B cell (primary cell): ENCODE measurements at regions of chr1 and their contacts with region 1.

Region 1: DNA sequence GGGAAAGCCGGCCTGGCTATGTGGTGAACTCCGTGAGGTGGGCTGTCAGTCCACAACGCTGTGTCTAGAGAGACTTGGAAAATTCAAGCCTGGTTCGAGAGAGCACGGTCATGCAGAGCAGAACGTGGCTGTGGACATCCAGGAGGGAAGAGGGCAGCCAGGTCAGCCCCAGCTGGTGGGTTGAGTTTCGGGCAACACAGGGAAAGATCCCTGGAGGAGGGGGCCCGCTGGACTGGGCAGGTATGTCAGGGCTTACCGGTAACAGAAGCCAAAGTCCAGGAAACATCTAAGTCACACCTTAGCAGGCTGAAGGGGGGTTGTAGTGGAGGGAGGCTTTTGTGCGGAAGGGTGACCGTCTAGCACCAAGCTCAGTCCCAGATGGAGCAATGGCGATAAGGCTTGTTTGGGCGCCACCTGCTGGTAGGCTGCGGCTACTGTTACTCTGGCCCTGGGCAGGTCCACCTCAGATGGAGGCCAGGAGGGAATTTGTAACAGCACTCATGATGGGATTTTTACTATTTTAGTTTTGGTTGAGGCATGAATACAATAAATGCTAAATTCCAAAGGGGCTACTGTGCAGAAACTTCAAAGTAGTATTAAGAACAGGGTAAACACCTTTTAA is 143.3 kb upstream of the ZNF644 start:
- DNase-seq: peak; percentile 73
- ATAC-seq: peak; percentile 82
- H3K4me3 ChIP-seq: no peak overlapping the region
- H3K4me3 Mint-ChIP-seq: no peak overlapping the region
- H3K27ac ChIP-seq: no peak overlapping the region
- H3K27ac Mint-ChIP-seq: no peak overlapping the region
- H3K4me1 ChIP-seq: peaks cover 0 to 4% of the 10 kb centered on the region in 2 donors
- H3K4me1 Mint-ChIP-seq: peaks cover 2% of the 10 kb centered on the region
- H3K27me3 ChIP-seq: no peaks in the 10 kb centered on the region
- H3K27me3 Mint-ChIP-seq: peaks cover 3% of the 10 kb centered on the region
- CTCF ChIP-seq: peak; percentile 95

Region 2: DNA sequence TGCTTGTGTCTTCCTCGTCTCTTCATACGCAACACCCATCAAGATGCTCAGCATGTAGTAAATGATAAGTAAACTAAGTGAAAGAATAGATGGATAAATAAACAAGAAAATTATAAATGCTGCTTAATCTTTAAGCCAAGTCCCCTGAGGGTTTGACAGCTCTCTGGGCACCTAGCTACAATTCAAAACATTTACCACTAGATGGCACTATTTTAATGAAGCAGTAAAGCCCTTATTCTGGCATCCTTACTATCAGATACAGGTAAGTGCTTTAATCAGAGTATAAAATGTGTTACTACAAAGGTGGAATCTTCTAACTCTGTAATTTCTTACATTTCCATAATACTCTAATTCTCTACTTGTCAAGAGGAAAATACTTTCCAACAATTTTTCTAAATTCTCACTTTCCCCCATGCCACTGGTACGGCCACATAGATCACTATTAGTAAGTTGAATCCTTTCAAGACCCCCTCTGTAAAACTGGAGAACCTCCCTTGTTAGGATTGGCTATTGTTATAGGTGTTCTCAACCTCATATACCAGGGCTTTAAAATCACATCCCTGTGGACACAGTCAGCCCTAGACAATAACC is 585.8 kb before region 1 on chr1:
- CTCF ChIA-PET with region 1: interaction called, 75 read pairs
- POLR2A ChIA-PET with region 1: no interaction called
- intact Hi-C with region 1: no loop called
- DNase-seq: peak; percentile 50
- ATAC-seq: no peak
- H3K4me3 ChIP-seq: no peak overlapping the region
- H3K4me3 Mint-ChIP-seq: no peak overlapping the region
- H3K27ac ChIP-seq: no peak overlapping the region
- H3K27ac Mint-ChIP-seq: no peak overlapping the region
- H3K4me1 ChIP-seq: no peaks in the 10 kb centered on the region
- H3K4me1 Mint-ChIP-seq: no peaks in the 10 kb centered on the region
- H3K27me3 ChIP-seq: no peaks in the 10 kb centered on the region
- H3K27me3 Mint-ChIP-seq: peaks cover 15% of the 10 kb centered on the region
- CTCF ChIP-seq: peak; percentile 83

Region 3: DNA sequence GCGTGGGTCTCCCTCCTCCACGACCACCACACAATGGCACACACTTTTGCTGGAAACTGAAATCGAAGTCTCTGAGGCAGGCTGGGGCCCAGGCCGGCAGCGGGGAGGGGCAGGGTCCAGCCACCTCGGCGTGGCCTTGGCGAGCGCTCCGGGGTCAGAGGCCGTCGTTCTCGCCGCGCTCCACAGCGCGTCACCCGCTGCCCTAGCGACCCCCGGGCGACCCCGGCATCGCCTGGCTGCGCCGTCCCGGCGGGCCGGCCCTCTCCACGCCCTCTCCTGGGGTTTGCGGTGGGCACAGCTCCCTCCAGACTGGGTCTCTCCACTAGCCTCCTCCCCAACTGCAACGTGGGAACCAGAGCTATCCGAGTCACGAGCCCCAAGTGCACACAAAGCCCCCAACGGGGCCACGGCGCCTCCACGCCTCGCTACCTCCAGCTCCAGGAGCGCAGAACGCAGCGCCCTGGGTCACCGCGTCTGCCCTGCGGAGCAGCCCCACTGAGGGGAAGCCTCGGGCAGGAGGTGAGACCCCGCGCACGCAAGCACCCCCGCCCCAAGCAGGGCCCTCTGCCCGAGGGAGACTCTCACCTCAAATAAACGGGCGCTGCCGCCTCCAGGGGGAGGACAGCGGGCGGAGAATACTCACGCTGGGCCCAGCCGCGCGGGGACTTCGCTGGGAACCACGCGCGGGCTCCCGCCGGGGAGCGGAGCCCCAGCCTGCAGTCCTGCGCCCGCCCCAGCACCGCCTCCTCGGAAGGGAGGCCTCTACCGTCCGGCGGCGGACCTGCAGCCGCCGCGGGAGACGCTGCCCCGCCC is 314.0 kb before region 1 on chr1:
- CTCF ChIA-PET with region 1: no interaction called
- POLR2A ChIA-PET with region 1: no interaction called
- intact Hi-C with region 1: loop called (anchors 5 kb)
- DNase-seq: peak; percentile 83
- ATAC-seq: peak; percentile 99
- H3K4me3 ChIP-seq: peak overlapping the region; percentile 17 to 72 (median 62)
- H3K4me3 Mint-ChIP-seq: peak overlapping the region; percentile 90
- H3K27ac ChIP-seq: no peak overlapping the region
- H3K27ac Mint-ChIP-seq: no peak overlapping the region
- H3K4me1 ChIP-seq: peaks cover 15 to 19% of the 10 kb centered on the region in 2 donors
- H3K4me1 Mint-ChIP-seq: peaks cover 13% of the 10 kb centered on the region
- H3K27me3 ChIP-seq: peaks cover 3 to 23% (median 23%) of the 10 kb centered on the region in 4 experiments
- H3K27me3 Mint-ChIP-seq: peaks cover 43% of the 10 kb centered on the region
- CTCF ChIP-seq: peak; percentile 76

Region 4: DNA sequence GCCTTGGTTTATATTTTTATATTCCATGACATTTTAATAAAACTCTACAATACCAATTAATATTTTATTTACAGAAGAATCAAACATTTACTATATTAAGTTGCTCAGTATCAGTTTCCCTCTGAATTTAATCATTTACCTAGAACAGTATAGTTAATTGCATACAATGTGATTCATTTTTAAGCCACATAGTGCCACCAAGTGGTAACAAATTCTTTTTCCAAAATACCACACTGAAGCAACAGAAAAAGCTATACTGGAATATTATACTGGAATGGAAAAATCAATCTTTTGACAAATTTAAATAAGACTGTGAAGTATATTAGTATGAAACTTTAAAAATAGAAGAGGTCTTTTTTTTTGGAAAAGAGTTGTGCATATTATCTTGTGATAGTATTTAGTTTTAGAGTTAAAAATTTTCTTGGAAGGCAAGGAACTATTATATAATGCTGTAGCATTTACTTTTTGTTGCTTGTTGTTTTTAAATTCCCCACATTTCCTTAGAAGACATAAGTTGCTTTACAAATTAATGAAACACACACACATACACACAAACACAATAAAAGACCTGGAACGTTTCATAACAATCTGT is 200.6 kb before region 1 on chr1:
- CTCF ChIA-PET with region 1: interaction called, 4 read pairs
- POLR2A ChIA-PET with region 1: no interaction called
- intact Hi-C with region 1: loop called (anchors 10 kb)
- DNase-seq: no peak
- ATAC-seq: no peak
- H3K4me3 ChIP-seq: no peak overlapping the region
- H3K4me3 Mint-ChIP-seq: no peak overlapping the region
- H3K27ac ChIP-seq: no peak overlapping the region
- H3K27ac Mint-ChIP-seq: no peak overlapping the region
- H3K4me1 ChIP-seq: no peaks in the 10 kb centered on the region
- H3K4me1 Mint-ChIP-seq: peaks cover 48% of the 10 kb centered on the region
- H3K27me3 ChIP-seq: no peaks in the 10 kb centered on the region
- H3K27me3 Mint-ChIP-seq: no peaks in the 10 kb centered on the region
- CTCF ChIP-seq: peak; percentile 12

Region 5: GRCh38 chr1:91021686-91022517 is 143.2 kb before region 1 on chr1 and contains the start of gene ZNF644:
- CTCF ChIA-PET with region 1: interaction called, 73 read pairs
- POLR2A ChIA-PET with region 1: interaction called, 4 read pairs
- intact Hi-C with region 1: loop called (anchors 1 kb)
- DNase-seq: peak; percentile 92
- ATAC-seq: peak; percentile 83
- H3K4me3 ChIP-seq: peak within 1 kb of the TSS; percentile 76 to 99 (median 95)
- H3K4me3 Mint-ChIP-seq: peak within 1 kb of the TSS; percentile 96
- H3K27ac ChIP-seq: peak within 1 kb of the TSS; percentile 100
- H3K27ac Mint-ChIP-seq: peak within 1 kb of the TSS; percentile 99
- H3K4me1 ChIP-seq: peaks cover 49 to 70% of the 10 kb centered on the region in 2 donors
- H3K4me1 Mint-ChIP-seq: peaks cover 74% of the 10 kb centered on the region
- H3K27me3 ChIP-seq: no peaks in the 10 kb centered on the region
- H3K27me3 Mint-ChIP-seq: no peaks in the 10 kb centered on the region
- CTCF ChIP-seq: no peak
- total RNA-seq, gene ZNF644: 124 and 131 TPM in 2 replicates

Region 6: DNA sequence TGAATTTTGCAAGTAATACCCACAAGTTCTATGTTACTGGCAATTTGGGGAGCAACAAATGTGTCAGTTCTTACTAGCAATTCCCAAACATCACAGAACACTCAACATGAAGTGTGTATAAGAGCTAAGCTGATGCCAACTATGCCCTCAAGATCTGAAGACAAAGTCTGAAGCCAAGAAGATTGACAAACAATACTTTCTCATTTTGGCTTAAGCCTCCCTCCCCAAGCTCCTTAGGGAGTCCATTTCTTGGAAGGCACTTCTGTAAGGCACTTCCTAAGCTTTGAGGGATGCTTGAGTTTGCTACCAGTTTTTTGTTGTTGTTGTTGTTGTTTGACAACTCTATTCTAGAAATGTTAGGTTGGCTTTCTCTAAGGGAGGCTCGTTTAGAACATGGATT is 11.1 kb after region 1 on chr1:
- CTCF ChIA-PET with region 1: interaction called, 13 read pairs
- POLR2A ChIA-PET with region 1: no interaction called
- intact Hi-C with region 1: no loop called
- DNase-seq: no peak
- ATAC-seq: no peak
- H3K4me3 ChIP-seq: no peak overlapping the region
- H3K4me3 Mint-ChIP-seq: no peak overlapping the region
- H3K27ac ChIP-seq: no peak overlapping the region
- H3K27ac Mint-ChIP-seq: no peak overlapping the region
- H3K4me1 ChIP-seq: no peaks in the 10 kb centered on the region
- H3K4me1 Mint-ChIP-seq: no peaks in the 10 kb centered on the region
- H3K27me3 ChIP-seq: peaks cover 0 to 19% (median 7%) of the 10 kb centered on the region in 4 experiments
- H3K27me3 Mint-ChIP-seq: peaks cover 30% of the 10 kb centered on the region
- CTCF ChIP-seq: no peak

Region 7: DNA sequence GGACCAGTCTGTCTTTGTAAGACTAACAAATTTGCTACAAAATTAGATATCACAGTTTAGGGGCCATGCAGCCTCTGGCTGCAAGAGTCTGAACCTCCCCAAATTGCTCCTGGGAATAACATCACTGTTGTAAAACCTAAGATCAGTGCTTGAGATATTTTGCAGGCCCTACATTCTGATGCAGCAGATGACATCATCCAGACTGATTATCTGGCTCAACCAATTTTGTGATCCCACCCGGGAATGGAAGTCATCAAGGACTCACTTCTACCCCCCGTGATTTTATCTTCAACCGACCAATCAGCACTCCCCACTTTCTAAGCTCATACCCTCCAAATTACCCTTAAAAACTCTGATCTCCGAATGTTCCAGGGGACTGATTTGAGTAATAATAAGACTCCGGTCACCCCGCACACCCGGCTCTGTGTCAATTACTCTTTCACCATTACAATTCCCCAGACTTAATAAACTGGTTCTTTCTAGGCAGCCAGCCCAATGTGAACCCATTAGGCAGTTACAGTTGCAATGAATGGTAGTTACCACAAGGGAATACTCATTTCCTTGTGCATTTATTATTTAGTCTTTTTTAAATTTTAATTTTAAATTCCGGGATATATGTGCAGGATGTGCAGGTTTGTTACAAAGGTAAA is 61.5 kb after region 1 on chr1:
- CTCF ChIA-PET with region 1: no interaction called
- POLR2A ChIA-PET with region 1: no interaction called
- intact Hi-C with region 1: no loop called
- DNase-seq: no peak
- ATAC-seq: no peak
- H3K4me3 ChIP-seq: no peak overlapping the region
- H3K4me3 Mint-ChIP-seq: no peak overlapping the region
- H3K27ac ChIP-seq: no peak overlapping the region
- H3K27ac Mint-ChIP-seq: no peak overlapping the region
- H3K4me1 ChIP-seq: no peaks in the 10 kb centered on the region
- H3K4me1 Mint-ChIP-seq: no peaks in the 10 kb centered on the region
- H3K27me3 ChIP-seq: no peaks in the 10 kb centered on the region
- H3K27me3 Mint-ChIP-seq: no peaks in the 10 kb centered on the region
- CTCF ChIP-seq: no peak